ENCODE measurements at regions of chr12 and their contacts with region 1.

Region 1: DNA sequence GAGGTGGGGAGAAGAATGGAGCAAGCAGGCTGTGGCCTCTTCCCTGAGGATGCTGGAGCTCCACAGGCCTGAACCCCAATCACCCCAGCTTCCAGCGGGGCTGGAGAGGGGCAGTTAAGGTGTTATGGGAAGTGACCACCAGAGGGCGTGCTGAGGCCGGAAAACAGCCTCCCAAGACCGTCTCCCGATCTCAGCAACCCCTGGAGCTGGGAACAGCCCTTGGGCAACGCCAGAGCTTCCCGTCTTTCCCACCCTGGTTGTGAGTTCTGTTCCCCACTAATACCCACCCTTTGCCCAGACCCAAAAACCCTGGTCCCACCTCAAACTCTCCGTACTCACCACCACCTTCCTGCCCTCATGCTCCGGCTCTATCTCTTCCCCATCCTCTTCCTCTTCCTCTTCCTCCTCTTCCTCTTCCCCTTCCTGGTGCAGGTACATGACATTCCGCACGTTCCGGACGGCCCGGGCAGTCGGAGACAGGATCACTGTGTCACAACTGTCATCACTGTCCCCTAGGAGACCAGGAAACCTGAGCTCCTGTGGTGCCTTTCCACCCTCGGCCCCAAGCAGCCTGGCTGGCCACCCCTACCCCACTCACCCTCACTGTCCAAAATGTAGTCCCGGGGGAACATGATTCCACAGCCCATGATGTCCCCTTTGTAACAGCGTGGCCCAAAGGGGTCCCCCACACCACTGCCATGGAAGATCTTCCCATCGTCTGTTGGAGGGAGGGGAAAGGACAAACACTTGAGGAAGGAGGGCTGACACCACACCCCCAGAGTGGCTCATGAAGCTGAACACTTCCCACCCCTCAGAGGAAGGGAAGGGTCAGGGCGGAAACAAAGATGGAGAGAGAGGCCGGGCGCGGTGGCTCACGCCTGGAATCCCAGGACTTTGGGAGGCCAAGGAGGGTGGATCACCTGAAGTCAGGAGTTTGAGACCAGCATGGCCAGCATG is 12.9 kb downstream of the SPRYD3 start:
- DNase-seq: peak; percentile 65
- H3K4me3 ChIP-seq: no peak overlapping the region
- H3K27ac ChIP-seq: peak overlapping the region; percentile 44
- H3K4me1 ChIP-seq: peaks cover 22% of the 10 kb centered on the region
- H3K27me3 ChIP-seq: no peaks in the 10 kb centered on the region
- CTCF ChIP-seq: peak; percentile 85 to 90
- POLR2A ChIP-seq: peak; percentile 39

Region 2: GRCh38 chr12:53054112-53054833 is 12.0 kb before region 1 on chr12:
- CTCF ChIA-PET with region 1: interaction called, 79 read pairs
- POLR2A ChIA-PET with region 1: interaction called, 3 read pairs
- dilution Hi-C with region 1: no loop called
- intact Hi-C with region 1: loop called (anchors 1 kb)
- DNase-seq: peak; percentile 90
- H3K4me3 ChIP-seq: peak overlapping the region in 2 of 3 experiments; percentile 16 to 37
- H3K27ac ChIP-seq: no peak overlapping the region
- H3K4me1 ChIP-seq: peaks cover 42% of the 10 kb centered on the region
- H3K27me3 ChIP-seq: no peaks in the 10 kb centered on the region
- CTCF ChIP-seq: no peak
- POLR2A ChIP-seq: peak; percentile 60

Region 3: GRCh38 chr12:53093777-53094393 is 27.6 kb after region 1 on chr12:
- CTCF ChIA-PET with region 1: interaction called, 463 read pairs
- POLR2A ChIA-PET with region 1: interaction called, 9 read pairs
- dilution Hi-C with region 1: no loop called
- intact Hi-C with region 1: loop called (anchors 1 kb)
- DNase-seq: no peak
- H3K4me3 ChIP-seq: no peak overlapping the region
- H3K27ac ChIP-seq: no peak overlapping the region
- H3K4me1 ChIP-seq: peaks cover 21% of the 10 kb centered on the region
- H3K27me3 ChIP-seq: peaks cover 0 to 2% of the 10 kb centered on the region in 2 experiments
- CTCF ChIP-seq: no peak
- POLR2A ChIP-seq: no peak

Region 4: GRCh38 chr12:53174881-53175491 is 108.7 kb after region 1 on chr12:
- CTCF ChIA-PET with region 1: interaction called, 35 read pairs
- POLR2A ChIA-PET with region 1: interaction called, 4 read pairs
- dilution Hi-C with region 1: no loop called
- intact Hi-C with region 1: no loop called
- DNase-seq: peak; percentile 28
- H3K4me3 ChIP-seq: no peak overlapping the region
- H3K27ac ChIP-seq: no peak overlapping the region
- H3K4me1 ChIP-seq: peaks cover 5% of the 10 kb centered on the region
- H3K27me3 ChIP-seq: no peaks in the 10 kb centered on the region
- CTCF ChIP-seq: peak; percentile 7 to 25
- POLR2A ChIP-seq: no peak

Region 5: DNA sequence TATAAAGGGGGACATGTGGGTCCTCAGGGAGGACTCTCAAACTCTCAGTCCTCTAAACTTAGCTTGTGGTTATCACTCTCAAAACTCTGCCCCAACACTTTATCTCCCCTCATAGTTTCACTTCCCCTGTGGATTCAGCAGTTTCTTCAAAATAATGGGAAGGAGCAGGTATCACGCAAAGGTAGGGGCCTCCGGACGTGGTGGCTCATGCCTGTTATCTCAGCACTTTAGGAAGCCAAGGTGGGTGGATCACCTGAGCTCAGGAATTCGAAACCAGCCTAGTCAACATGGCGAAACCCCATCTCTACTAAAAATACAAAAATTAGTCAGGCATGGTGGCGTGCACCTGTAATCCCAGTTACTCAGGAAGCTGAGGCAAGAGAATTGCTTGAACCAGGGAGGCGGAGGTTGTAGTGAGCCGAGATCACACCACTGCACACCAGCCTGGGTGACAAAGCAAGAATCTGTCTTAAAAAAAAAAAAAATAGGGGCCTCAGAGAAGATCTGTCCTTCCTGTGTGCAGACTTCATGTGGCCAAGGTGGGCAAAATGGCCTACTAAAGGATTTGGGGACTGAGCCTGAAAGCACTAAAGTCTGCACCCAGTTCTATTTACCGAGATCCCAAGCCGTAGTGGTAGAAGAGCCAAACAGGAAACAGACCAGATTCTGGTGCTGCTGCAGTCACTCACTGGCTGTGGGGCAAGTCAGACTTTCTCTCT is 134.4 kb after region 1 on chr12:
- CTCF ChIA-PET with region 1: interaction called, 170 read pairs
- POLR2A ChIA-PET with region 1: interaction called, 3 read pairs
- dilution Hi-C with region 1: no loop called
- intact Hi-C with region 1: loop called (anchors 1 kb)
- DNase-seq: no peak
- H3K4me3 ChIP-seq: no peak overlapping the region
- H3K27ac ChIP-seq: no peak overlapping the region
- H3K4me1 ChIP-seq: peaks cover 6% of the 10 kb centered on the region
- H3K27me3 ChIP-seq: peaks cover 0 to 2% of the 10 kb centered on the region in 2 experiments
- CTCF ChIP-seq: no peak
- POLR2A ChIP-seq: no peak

Measured in endothelial cell of umbilical vein (primary cell).